IMR-90 (cell line): ENCODE measurements at regions of chr12 and their contacts with region 1.

Region 1: DNA sequence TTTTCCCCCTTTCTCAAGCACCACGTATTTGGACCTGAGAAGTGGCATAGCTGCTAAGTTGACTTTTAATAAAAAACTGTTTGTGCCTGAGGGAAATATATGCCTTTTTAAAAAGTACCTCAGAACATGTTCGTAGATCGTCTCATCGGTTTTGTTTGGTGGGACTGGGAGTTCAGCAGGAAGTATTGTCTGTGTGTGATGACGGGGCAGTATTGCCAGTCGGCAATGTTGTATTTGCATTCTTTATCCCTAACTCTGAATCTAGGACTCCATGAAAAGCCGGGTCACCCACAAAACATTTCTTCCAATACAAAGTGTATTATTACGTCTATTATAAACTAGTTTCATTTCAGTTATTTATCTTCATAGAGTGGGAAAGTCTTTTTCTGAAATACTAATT is 19.7 kb upstream of the FGD4 start:
- DNase-seq: no peak
- ATAC-seq: no peak
- H3K4me3 ChIP-seq: no peak overlapping the region
- H3K27ac ChIP-seq: no peak overlapping the region
- H3K4me1 ChIP-seq: no peaks in the 10 kb centered on the region
- H3K27me3 ChIP-seq: no peaks in the 10 kb centered on the region
- CTCF ChIP-seq: no peak
- POLR2A ChIP-seq: no peak
- RAD21 ChIP-seq: no peak

Region 2: GRCh38 chr12:32437095-32437515 is 57.4 kb after region 1 on chr12:
- CTCF ChIA-PET with region 1: no interaction called
- POLR2A ChIA-PET with region 1: interaction called, 4 read pairs
- dilution Hi-C with region 1: no loop called
- in situ Hi-C with region 1: no loop called
- intact Hi-C with region 1: loop called (anchors 5 kb)
- DNase-seq: peak; percentile 92
- ATAC-seq: peak; percentile 75
- H3K4me3 ChIP-seq: no peak overlapping the region
- H3K27ac ChIP-seq: no peak overlapping the region
- H3K4me1 ChIP-seq: peaks cover 9% of the 10 kb centered on the region
- H3K27me3 ChIP-seq: no peaks in the 10 kb centered on the region
- CTCF ChIP-seq: no peak
- POLR2A ChIP-seq: no peak
- RAD21 ChIP-seq: no peak

Region 3: DNA sequence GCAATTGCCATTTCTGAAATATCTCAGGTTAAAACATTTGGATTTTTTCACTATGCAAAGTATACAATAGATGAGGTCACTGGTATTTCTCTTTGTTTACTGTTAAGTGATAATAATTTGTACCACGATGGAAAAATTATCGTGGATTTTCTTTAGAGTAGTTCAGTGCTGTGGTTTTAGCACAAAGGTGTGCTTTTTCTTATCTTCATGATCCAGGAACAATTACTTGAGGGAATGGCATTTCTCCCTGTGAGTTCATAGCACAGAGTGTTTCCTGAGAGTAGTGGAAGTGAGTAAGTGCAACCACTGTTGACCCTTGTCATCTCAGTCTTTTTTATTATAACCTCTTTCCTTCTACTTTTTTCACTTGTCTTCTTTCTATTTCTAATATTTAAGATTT is 106.5 kb after region 1 on chr12:
- CTCF ChIA-PET with region 1: no interaction called
- POLR2A ChIA-PET with region 1: no interaction called
- dilution Hi-C with region 1: no loop called
- in situ Hi-C with region 1: no loop called
- intact Hi-C with region 1: no loop called
- DNase-seq: no peak
- ATAC-seq: no peak
- H3K4me3 ChIP-seq: no peak overlapping the region
- H3K27ac ChIP-seq: no peak overlapping the region
- H3K4me1 ChIP-seq: no peaks in the 10 kb centered on the region
- H3K27me3 ChIP-seq: no peaks in the 10 kb centered on the region
- CTCF ChIP-seq: no peak
- POLR2A ChIP-seq: no peak
- RAD21 ChIP-seq: no peak

Region 4: DNA sequence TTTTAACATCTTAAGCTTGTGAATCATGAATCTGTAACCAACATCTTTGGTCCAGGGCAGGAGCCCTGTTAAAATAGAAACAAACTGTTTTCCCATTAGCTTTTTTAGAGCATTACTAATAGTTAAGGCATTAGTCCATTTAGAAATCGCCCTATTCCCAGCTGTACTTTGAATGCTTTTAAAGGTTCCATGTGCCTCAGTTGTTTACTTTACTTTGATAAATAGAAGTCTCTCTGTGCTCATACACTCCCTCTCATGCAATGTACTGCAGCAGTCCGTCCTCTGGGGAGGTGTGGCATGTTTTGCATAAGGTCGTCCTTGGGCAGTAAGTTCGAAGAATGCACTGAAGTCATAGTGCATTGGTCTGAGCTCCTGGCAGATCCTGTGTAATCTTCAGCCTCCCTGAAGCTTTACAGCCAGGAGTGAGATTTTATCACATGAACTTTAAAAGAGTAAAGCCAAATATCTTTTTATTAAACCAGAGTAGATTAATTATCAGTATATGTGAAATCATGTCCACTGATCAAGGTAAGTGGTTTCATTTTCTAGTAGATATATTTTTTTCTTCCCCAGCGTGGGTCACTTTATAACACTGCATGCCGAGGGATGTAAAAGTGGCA is 154.4 kb after region 1 on chr12:
- CTCF ChIA-PET with region 1: no interaction called
- POLR2A ChIA-PET with region 1: no interaction called
- dilution Hi-C with region 1: no loop called
- in situ Hi-C with region 1: no loop called
- intact Hi-C with region 1: loop called (anchors 10 kb)
- DNase-seq: peak; percentile 98
- ATAC-seq: peak; percentile 90
- H3K4me3 ChIP-seq: peak overlapping the region; percentile 50
- H3K27ac ChIP-seq: peak overlapping the region; percentile 6; the same call in 1 of the 2 replicates
- H3K4me1 ChIP-seq: peaks cover 4% of the 10 kb centered on the region
- H3K27me3 ChIP-seq: no peaks in the 10 kb centered on the region
- CTCF ChIP-seq: no peak
- POLR2A ChIP-seq: peak; percentile 80
- RAD21 ChIP-seq: no peak

Region 5: GRCh38 chr12:32671930-32672780 is 292.5 kb after region 1 on chr12:
- CTCF ChIA-PET with region 1: no interaction called
- POLR2A ChIA-PET with region 1: no interaction called
- dilution Hi-C with region 1: no loop called
- in situ Hi-C with region 1: loop called (anchors 5 kb)
- intact Hi-C with region 1: loop called (anchors 5 kb)
- DNase-seq: peak; percentile 83
- ATAC-seq: peak; percentile 92
- H3K4me3 ChIP-seq: no peak overlapping the region
- H3K27ac ChIP-seq: no peak overlapping the region
- H3K4me1 ChIP-seq: no peaks in the 10 kb centered on the region
- H3K27me3 ChIP-seq: no peaks in the 10 kb centered on the region
- CTCF ChIP-seq: peak; percentile 77
- POLR2A ChIP-seq: no peak
- RAD21 ChIP-seq: peak; percentile 83